Heart right ventricle (tissue), 16 donors: ENCODE measurements at regions of chr1 and their contacts with region 1.

Region 1: DNA sequence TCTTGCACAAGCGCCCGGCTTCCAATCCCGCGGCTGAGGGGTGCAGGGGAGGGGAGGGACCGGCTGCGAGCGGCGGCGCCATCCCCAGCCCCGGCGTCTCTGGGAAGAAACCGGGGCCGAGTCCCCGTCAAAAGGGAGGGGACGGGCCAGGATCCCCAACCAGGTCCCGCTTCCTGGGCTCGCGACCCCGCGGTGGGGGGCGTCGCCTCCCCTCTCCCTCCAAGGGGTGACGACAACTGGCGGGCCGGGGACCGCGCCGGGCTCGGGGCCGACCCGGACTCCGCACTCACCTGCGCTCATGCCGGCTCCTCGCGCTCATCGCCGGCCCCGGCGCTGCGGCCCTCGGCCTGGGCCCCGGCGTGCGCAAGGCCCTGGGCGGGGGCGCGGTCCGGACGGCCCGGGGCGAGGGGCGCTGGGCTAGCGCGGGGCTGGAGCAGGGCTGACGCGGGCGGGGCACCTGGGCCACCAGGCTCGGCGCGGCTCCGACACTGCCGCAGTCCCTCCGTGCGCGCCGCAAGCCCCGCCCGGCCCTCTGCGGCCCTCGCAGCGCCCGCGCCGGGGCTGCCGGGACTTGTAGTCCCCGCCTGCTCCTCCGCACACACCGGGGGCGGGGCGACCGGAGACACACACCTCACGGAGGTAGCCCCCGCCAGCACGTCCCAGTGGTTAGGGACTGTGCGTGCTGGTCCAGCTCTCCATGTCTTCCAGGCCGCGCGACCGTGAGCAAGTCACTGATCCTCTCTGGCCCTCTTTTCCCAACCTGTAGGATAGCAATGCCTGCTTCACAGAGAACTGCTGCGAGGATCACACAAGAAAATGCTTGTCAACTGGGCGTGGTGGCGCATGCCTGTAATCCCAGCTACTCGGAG is at the start of gene ATP13A2:
- DNase-seq: peak; percentile 70 to 85
- ATAC-seq: peak; percentile 87 to 98 (median 92)
- H3K4me3 ChIP-seq: peak within 1 kb of the TSS; percentile 64 to 99 (median 92)
- H3K27ac ChIP-seq: peak within 1 kb of the TSS in 9 of 10 donors; percentile 58 to 82 (median 79)
- H3K4me1 ChIP-seq: peaks cover 7 to 51% (median 26%) of the 10 kb centered on the region in 9 donors
- H3K27me3 ChIP-seq: no peaks in the 10 kb centered on the region
- CTCF ChIP-seq: no peak
- total RNA-seq, gene ATP13A2: 7.2 to 20.0 (median 10.6) TPM

Region 2: GRCh38 chr1:16960560-16961296 is 50.9 kb before region 1 on chr1:
- intact Hi-C with region 1: loop called in 1 of 10 experiments (anchors 5 kb)
- DNase-seq: peak; percentile 72 to 81
- ATAC-seq: peak; percentile 70 to 92 (median 78)
- H3K4me3 ChIP-seq: peak overlapping the region in 8 of 10 donors; percentile 21 to 48 (median 42)
- H3K27ac ChIP-seq: peak overlapping the region in 3 of 10 donors; percentile 25 to 43 (median 34)
- H3K4me1 ChIP-seq: peaks cover 0 to 22% (median 0%) of the 10 kb centered on the region in 9 donors
- H3K27me3 ChIP-seq: no peaks in the 10 kb centered on the region
- CTCF ChIP-seq: peak; percentile 10 to 71 (median 59)

Region 3: GRCh38 chr1:17053685-17054410 is 42.2 kb after region 1 on chr1 and contains the start of gene SDHB:
- intact Hi-C with region 1: loop called in 2 of 10 experiments (anchors 5 kb)
- DNase-seq: peak; percentile 99
- ATAC-seq: peak; percentile 98 to 99 (median 99)
- H3K4me3 ChIP-seq: peak within 1 kb of the TSS; percentile 66 to 86 (median 74)
- H3K27ac ChIP-seq: peak within 1 kb of the TSS; percentile 41 to 92 (median 87)
- H3K4me1 ChIP-seq: peaks cover 5 to 34% (median 26%) of the 10 kb centered on the region in 9 donors
- H3K27me3 ChIP-seq: no peaks in the 10 kb centered on the region
- CTCF ChIP-seq: no peak
- total RNA-seq, gene SDHB: 222 to 486 (median 379) TPM